CD8-positive, alpha-beta T cell (primary cell): ENCODE measurements at regions of chr4 and their contacts with region 1.

Region 1: GRCh38 chr4:77044461-77045150 is 31.2 kb downstream of the CCNI start:
- DNase-seq: peak in 2 of 9 experiments; percentile 46 to 62
- ATAC-seq: peak; percentile 60
- H3K4me3 ChIP-seq: no peak overlapping the region
- H3K4me3 Mint-ChIP-seq: no peak overlapping the region
- H3K27ac ChIP-seq: no peak overlapping the region
- H3K27ac Mint-ChIP-seq: peak overlapping the region; percentile 60
- H3K4me1 ChIP-seq: peaks cover 6% of the 10 kb centered on the region
- H3K4me1 Mint-ChIP-seq: peaks cover 16% of the 10 kb centered on the region
- H3K27me3 ChIP-seq: no peaks in the 10 kb centered on the region
- H3K27me3 Mint-ChIP-seq: no peaks in the 10 kb centered on the region
- CTCF ChIP-seq: peak; percentile 56

Region 2: DNA sequence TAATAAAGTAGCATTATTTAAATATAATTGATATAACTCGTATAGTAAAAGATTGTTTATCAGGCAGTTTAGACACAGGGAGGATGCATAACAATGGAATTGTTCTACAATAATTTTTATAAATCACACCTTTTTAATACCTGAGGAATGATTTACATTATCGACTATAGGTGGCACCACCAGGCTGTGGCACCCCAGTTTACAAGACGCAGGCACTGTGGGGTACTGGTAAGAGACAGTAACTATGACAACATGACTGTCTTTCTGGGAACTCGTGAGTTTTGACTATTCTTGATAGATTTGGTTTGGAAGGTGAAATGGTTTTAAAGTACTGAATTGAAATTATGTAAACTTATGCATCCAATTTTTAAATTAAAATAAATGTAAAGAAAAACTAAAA is 765.1 kb before region 1 on chr4:
- CTCF ChIA-PET with region 1: no interaction called
- POLR2A ChIA-PET with region 1: no interaction called
- intact Hi-C with region 1: loop called in 1 of 2 experiments (anchors 10 kb)
- DNase-seq: peak in 6 of 9 experiments; percentile 2 to 55 (median 30)
- ATAC-seq: peak; percentile 49
- H3K4me3 ChIP-seq: no peak overlapping the region
- H3K4me3 Mint-ChIP-seq: no peak overlapping the region
- H3K27ac ChIP-seq: no peak overlapping the region
- H3K27ac Mint-ChIP-seq: no peak overlapping the region
- H3K4me1 ChIP-seq: no peaks in the 10 kb centered on the region
- H3K4me1 Mint-ChIP-seq: no peaks in the 10 kb centered on the region
- H3K27me3 ChIP-seq: peaks cover 0 to 5% of the 10 kb centered on the region in 2 experiments
- H3K27me3 Mint-ChIP-seq: peaks cover 10% of the 10 kb centered on the region
- CTCF ChIP-seq: peak; percentile 18

Region 3: DNA sequence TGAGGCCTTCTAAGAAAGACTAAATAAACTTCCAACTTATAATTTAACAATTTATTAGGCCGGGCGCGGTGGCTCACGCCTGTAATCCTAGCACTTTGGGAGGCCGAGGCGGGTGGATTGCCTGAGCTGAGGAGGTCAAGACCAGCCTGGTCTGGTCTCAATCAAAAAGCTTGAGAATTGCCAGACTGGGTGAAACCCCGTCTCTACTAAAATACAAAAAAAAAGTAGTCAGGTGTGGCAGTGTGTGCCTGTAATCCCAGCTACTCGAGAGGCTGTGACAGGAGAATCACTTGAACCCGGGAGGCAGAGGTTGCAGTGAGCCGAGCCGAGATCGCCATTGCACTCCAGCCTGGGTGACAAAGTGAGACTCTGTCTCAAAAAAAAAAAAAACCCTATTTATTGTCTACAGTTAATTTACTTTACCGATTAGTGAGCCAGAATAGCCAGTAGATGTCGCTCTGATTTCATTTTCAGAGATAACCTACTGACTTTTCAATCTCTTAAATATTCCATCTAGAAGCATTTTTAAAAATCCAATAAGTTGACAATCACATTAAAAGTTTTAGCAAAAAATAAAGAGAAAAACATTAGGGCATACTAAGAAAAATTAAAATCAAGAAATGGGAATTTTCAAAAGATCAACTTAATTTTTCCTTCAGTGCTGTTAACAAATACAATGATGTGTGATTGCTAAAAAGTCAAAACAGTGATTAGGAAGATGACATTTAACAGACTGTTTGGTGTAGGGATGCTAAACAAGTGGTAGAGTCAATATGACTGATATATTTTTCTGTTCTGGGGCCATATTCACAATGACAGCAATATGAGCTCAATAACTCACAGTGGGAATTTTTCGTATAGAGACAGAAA is 613.9 kb before region 1 on chr4:
- CTCF ChIA-PET with region 1: no interaction called
- POLR2A ChIA-PET with region 1: no interaction called
- intact Hi-C with region 1: loop called (anchors 2 to 10 kb)
- DNase-seq: peak in 2 of 9 experiments; percentile 52 to 61
- ATAC-seq: no peak
- H3K4me3 ChIP-seq: no peak overlapping the region
- H3K4me3 Mint-ChIP-seq: no peak overlapping the region
- H3K27ac ChIP-seq: no peak overlapping the region
- H3K27ac Mint-ChIP-seq: no peak overlapping the region
- H3K4me1 ChIP-seq: no peaks in the 10 kb centered on the region
- H3K4me1 Mint-ChIP-seq: no peaks in the 10 kb centered on the region
- H3K27me3 ChIP-seq: no peaks in the 10 kb centered on the region
- H3K27me3 Mint-ChIP-seq: peaks cover under 1% of the 10 kb centered on the region
- CTCF ChIP-seq: peak; percentile 67

Region 4: DNA sequence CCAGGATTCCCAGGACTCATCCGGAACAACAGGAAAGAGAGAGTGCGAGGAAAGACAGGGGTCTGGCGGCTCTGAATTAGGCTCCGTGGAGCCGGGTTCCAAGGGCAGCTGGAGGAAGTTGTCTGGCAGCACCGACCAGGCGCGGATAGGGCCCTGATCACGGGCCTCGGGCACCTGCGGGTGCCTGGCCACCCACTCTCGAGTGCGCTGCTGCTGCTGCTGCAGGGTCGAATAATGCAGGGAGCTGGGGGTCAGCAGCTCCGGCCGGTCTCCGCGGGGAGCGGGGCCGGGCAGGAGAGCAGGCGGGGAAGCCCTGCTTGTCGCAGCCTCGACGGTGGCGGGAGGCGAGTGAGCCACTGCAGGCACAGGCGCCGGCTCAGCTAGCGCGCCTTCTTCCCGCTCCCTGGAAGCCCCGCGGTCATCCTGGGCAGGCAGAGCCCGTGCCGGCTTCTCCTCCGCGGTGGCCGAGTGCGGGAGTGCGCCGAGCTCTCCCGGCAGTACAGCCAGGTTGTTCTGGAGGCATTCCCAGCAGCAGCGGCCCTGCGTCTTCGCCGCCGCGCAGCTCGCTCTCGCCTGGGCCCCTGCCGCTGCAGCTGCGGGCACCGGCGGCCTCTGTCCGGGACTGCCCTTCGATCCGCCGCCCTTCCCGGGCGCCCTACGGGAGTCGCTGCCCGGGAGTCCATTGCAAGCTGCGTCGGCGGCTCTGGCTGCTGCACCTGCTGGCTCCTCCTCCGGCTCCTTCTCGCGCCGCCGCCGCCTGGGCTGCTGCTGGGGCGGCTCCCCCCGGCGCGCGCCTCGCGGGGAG is 147.7 kb before region 1 on chr4:
- CTCF ChIA-PET with region 1: interaction called, 4 read pairs
- POLR2A ChIA-PET with region 1: no interaction called
- intact Hi-C with region 1: loop called in 1 of 2 experiments (anchors 5 kb)
- DNase-seq: peak in 6 of 9 experiments; percentile 30 to 59 (median 45)
- ATAC-seq: peak; percentile 67
- H3K4me3 ChIP-seq: peak overlapping the region; percentile 16 to 53
- H3K4me3 Mint-ChIP-seq: no peak overlapping the region
- H3K27ac ChIP-seq: no peak overlapping the region
- H3K27ac Mint-ChIP-seq: no peak overlapping the region
- H3K4me1 ChIP-seq: peaks cover 2% of the 10 kb centered on the region
- H3K4me1 Mint-ChIP-seq: peaks cover 11% of the 10 kb centered on the region
- H3K27me3 ChIP-seq: peaks cover 13 to 14% of the 10 kb centered on the region in 2 experiments
- H3K27me3 Mint-ChIP-seq: peaks cover 32% of the 10 kb centered on the region
- CTCF ChIP-seq: no peak

Region 5: GRCh38 chr4:76987153-76987587 is 57.4 kb before region 1 on chr4:
- CTCF ChIA-PET with region 1: interaction called, 7 read pairs
- POLR2A ChIA-PET with region 1: no interaction called
- intact Hi-C with region 1: loop called in 1 of 2 experiments (anchors 2 kb)
- DNase-seq: no peak
- ATAC-seq: no peak
- H3K4me3 ChIP-seq: no peak overlapping the region
- H3K4me3 Mint-ChIP-seq: no peak overlapping the region
- H3K27ac ChIP-seq: no peak overlapping the region
- H3K27ac Mint-ChIP-seq: no peak overlapping the region
- H3K4me1 ChIP-seq: peaks cover 67% of the 10 kb centered on the region
- H3K4me1 Mint-ChIP-seq: peaks cover 89% of the 10 kb centered on the region
- H3K27me3 ChIP-seq: no peaks in the 10 kb centered on the region
- H3K27me3 Mint-ChIP-seq: no peaks in the 10 kb centered on the region
- CTCF ChIP-seq: no peak

Region 6: DNA sequence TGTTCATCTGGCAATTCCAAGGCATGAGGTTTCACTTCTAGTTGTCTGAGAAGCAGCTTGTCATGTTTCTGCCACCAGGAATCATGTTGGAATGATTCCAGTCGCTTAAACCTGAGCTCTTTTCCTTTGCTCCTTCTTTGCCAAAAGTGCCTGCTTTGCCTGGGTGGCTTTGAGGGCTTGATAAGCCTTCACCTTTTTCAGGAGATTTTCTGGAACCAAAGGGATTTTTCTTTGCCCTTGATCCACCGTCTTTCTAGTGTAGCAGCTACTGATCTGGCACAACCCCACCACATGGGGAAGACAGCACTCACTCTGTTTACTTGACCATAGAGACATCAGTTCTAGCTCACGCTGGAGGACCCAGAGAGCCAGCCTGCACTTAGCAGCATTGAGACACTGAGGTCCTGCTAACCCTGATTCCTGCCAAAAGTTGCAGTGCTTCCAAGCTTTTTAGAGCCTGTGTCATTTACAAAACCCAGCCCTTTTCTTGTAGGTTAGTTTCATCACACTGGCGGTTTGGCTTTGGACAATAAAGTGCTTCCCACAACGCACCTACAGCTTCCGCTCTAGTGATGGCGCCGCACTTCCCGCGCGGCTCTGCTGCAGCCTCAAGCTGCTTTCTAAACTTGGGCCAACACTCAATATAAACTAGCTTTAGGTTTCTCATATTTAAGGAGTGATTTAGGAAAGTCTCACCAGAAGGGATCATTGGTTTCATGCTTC is 38.4 kb after region 1 on chr4:
- CTCF ChIA-PET with region 1: interaction called, 3 read pairs
- POLR2A ChIA-PET with region 1: no interaction called
- intact Hi-C with region 1: loop called in 1 of 2 experiments (anchors 5 kb)
- DNase-seq: no peak
- ATAC-seq: no peak
- H3K4me3 ChIP-seq: no peak overlapping the region
- H3K4me3 Mint-ChIP-seq: no peak overlapping the region
- H3K27ac ChIP-seq: no peak overlapping the region
- H3K27ac Mint-ChIP-seq: no peak overlapping the region
- H3K4me1 ChIP-seq: peaks cover 1% of the 10 kb centered on the region
- H3K4me1 Mint-ChIP-seq: peaks cover 20% of the 10 kb centered on the region
- H3K27me3 ChIP-seq: no peaks in the 10 kb centered on the region
- H3K27me3 Mint-ChIP-seq: no peaks in the 10 kb centered on the region
- CTCF ChIP-seq: no peak

Region 7: DNA sequence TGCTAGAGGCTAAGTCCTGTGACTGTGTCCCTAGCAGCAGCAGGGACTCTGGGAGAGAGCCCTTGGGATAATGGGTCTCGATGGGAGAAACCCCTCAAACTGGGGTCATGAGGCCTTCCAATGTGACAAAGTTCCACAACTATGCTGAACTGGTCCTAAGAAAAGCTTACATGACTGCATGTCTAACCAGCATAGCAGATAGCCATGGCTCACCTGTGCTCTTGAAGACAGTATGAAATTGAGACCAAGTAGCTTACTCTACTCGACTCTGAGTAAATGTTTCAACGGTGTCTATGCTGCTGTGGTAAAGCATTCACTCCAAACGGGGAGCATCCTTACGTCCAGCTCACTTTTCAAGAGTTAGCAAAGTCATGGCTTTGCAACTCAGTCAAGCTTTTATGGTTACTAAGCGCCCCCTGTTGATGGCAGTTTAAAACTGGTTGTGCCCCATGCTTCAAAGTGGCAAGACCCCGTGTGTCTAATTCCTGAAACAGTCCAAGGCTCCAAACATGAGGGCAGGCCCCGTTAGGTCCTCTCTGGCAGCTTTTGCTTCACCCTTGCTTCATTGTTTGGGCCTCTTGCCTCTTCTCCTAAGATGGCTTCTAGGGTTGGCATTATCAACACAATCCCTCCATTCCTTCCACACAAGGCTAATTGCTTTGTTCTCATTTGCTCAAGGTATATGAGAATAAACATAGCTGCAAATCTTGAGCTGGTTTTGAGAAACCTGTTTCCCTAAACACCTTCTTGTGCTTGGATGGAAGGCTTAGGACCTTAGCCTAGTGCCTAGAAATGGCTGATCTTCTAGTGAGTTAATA is 159.0 kb after region 1 on chr4:
- CTCF ChIA-PET with region 1: interaction called, 111 read pairs
- POLR2A ChIA-PET with region 1: interaction called, 5 read pairs
- intact Hi-C with region 1: loop called in 1 of 2 experiments (anchors 1 kb)
- DNase-seq: peak; percentile 28 to 83 (median 72)
- ATAC-seq: peak; percentile 71
- H3K4me3 ChIP-seq: no peak overlapping the region
- H3K4me3 Mint-ChIP-seq: no peak overlapping the region
- H3K27ac ChIP-seq: no peak overlapping the region
- H3K27ac Mint-ChIP-seq: no peak overlapping the region
- H3K4me1 ChIP-seq: no peaks in the 10 kb centered on the region
- H3K4me1 Mint-ChIP-seq: peaks cover 10% of the 10 kb centered on the region
- H3K27me3 ChIP-seq: no peaks in the 10 kb centered on the region
- H3K27me3 Mint-ChIP-seq: peaks cover 5% of the 10 kb centered on the region
- CTCF ChIP-seq: peak; percentile 75